CD8-positive, alpha-beta T cell (primary cell): ENCODE measurements at regions of chr17 and their contacts with region 1.

Region 1: GRCh38 chr17:64025732-64026294 is 5.4 kb upstream of the ICAM2 start:
- DNase-seq: peak; percentile 85 to 98 (median 94)
- ATAC-seq: peak; percentile 84
- H3K4me3 ChIP-seq: peak overlapping the region; percentile 19 to 37
- H3K4me3 Mint-ChIP-seq: peak overlapping the region; percentile 80
- H3K27ac ChIP-seq: peak overlapping the region; percentile 68 to 92
- H3K27ac Mint-ChIP-seq: peak overlapping the region; percentile 98
- H3K4me1 ChIP-seq: peaks cover 53% of the 10 kb centered on the region
- H3K4me1 Mint-ChIP-seq: peaks cover 58% of the 10 kb centered on the region
- H3K27me3 ChIP-seq: no peaks in the 10 kb centered on the region
- H3K27me3 Mint-ChIP-seq: no peaks in the 10 kb centered on the region
- CTCF ChIP-seq: peak; percentile 94

Region 2: GRCh38 chr17:63919311-63919723 is 106.5 kb before region 1 on chr17:
- CTCF ChIA-PET with region 1: interaction called, 262 read pairs
- POLR2A ChIA-PET with region 1: interaction called, 12 read pairs
- intact Hi-C with region 1: loop called (anchors 1 kb)
- DNase-seq: peak; percentile 53 to 88 (median 72)
- ATAC-seq: peak; percentile 100
- H3K4me3 ChIP-seq: no peak overlapping the region
- H3K4me3 Mint-ChIP-seq: no peak overlapping the region
- H3K27ac ChIP-seq: no peak overlapping the region
- H3K27ac Mint-ChIP-seq: no peak overlapping the region
- H3K4me1 ChIP-seq: no peaks in the 10 kb centered on the region
- H3K4me1 Mint-ChIP-seq: peaks cover 8% of the 10 kb centered on the region
- H3K27me3 ChIP-seq: no peaks in the 10 kb centered on the region
- H3K27me3 Mint-ChIP-seq: no peaks in the 10 kb centered on the region
- CTCF ChIP-seq: peak; percentile 91

Region 3: GRCh38 chr17:63954402-63955063 is 71.3 kb before region 1 on chr17:
- CTCF ChIA-PET with region 1: interaction called, 15 read pairs
- POLR2A ChIA-PET with region 1: interaction called, 3 read pairs
- intact Hi-C with region 1: no loop called
- DNase-seq: peak in 8 of 9 experiments; percentile 14 to 66 (median 46)
- ATAC-seq: peak; percentile 81
- H3K4me3 ChIP-seq: no peak overlapping the region
- H3K4me3 Mint-ChIP-seq: peak overlapping the region; percentile 35
- H3K27ac ChIP-seq: peak overlapping the region in 1 of 2 experiments; percentile 3
- H3K27ac Mint-ChIP-seq: peak overlapping the region; percentile 75
- H3K4me1 ChIP-seq: peaks cover 19% of the 10 kb centered on the region
- H3K4me1 Mint-ChIP-seq: peaks cover 24% of the 10 kb centered on the region
- H3K27me3 ChIP-seq: no peaks in the 10 kb centered on the region
- H3K27me3 Mint-ChIP-seq: no peaks in the 10 kb centered on the region
- CTCF ChIP-seq: no peak

Region 4: DNA sequence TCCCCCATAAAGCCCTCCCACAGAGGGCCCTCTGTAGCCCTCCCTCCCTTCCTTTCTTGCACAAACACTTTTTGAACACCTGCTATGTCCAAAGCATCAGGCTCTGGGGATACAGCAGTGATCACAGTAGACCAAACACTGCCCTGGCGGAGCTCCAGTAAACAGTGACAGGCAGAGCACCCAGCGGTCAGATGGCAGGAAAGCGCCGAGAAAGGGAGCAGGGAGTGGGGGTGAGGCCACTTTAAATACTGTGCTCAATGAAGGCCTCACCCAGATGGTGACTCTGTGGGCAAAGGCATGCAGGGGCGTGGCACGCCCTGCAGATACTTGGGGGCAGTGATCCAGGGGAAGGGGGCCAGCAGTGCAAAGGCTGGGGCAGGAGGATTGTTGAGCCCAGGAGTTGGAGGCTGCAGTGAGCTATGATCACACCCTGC is 20.1 kb before region 1 on chr17:
- CTCF ChIA-PET with region 1: interaction called, 293 read pairs
- POLR2A ChIA-PET with region 1: interaction called, 20 read pairs
- intact Hi-C with region 1: loop called in 1 of 2 experiments (anchors 2 kb)
- DNase-seq: no peak
- ATAC-seq: no peak
- H3K4me3 ChIP-seq: no peak overlapping the region
- H3K4me3 Mint-ChIP-seq: no peak overlapping the region
- H3K27ac ChIP-seq: no peak overlapping the region
- H3K27ac Mint-ChIP-seq: peak overlapping the region; percentile 85
- H3K4me1 ChIP-seq: peaks cover 39% of the 10 kb centered on the region
- H3K4me1 Mint-ChIP-seq: peaks cover 45% of the 10 kb centered on the region
- H3K27me3 ChIP-seq: no peaks in the 10 kb centered on the region
- H3K27me3 Mint-ChIP-seq: no peaks in the 10 kb centered on the region
- CTCF ChIP-seq: no peak

Region 5: GRCh38 chr17:64056269-64057005 is 30.6 kb after region 1 on chr17:
- CTCF ChIA-PET with region 1: interaction called, 155 read pairs
- POLR2A ChIA-PET with region 1: interaction called, 10 read pairs
- intact Hi-C with region 1: no loop called
- DNase-seq: peak in 2 of 9 experiments; percentile 22 to 44
- ATAC-seq: peak; percentile 39
- H3K4me3 ChIP-seq: no peak overlapping the region
- H3K4me3 Mint-ChIP-seq: no peak overlapping the region
- H3K27ac ChIP-seq: peak overlapping the region; percentile 12 to 58
- H3K27ac Mint-ChIP-seq: peak overlapping the region; percentile 78
- H3K4me1 ChIP-seq: peaks cover 18% of the 10 kb centered on the region
- H3K4me1 Mint-ChIP-seq: peaks cover 41% of the 10 kb centered on the region
- H3K27me3 ChIP-seq: no peaks in the 10 kb centered on the region
- H3K27me3 Mint-ChIP-seq: no peaks in the 10 kb centered on the region
- CTCF ChIP-seq: no peak

Region 6: DNA sequence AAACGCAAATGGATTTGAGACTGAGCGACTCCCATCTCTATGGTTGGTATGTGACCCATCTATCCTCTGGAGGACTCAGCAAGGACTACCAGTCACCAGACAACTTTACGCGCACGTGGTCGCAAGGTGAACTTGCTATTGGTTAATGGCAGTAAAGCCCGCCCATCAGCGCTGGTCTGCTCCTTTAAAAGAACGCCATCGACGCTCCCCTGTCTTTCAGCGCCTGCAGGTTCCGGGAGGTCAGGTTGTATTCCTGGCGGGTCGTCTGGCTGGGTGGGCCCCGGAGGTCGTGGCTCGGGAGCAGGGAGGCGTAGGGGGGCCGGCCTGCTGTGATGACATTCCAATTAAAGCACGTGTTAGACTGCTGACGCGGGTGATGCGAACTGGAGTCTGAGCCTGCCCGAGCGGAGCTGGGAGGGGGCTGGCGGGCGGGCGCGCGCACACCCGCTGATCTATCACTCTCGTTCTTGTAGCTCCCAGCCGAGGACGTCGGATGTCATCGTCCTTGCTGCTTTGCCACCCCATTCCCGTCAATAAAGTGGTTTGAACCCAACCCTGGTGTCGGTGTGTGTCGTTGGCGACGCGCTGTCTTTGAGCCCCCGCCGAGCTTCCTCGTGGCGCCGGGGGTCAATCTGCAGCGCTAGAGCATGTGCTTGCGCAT is 120.1 kb after region 1 on chr17:
- CTCF ChIA-PET with region 1: interaction called, 10 read pairs
- POLR2A ChIA-PET with region 1: interaction called, 59 read pairs
- intact Hi-C with region 1: no loop called
- DNase-seq: peak; percentile 88 to 99 (median 95)
- ATAC-seq: peak; percentile 88
- H3K4me3 ChIP-seq: peak overlapping the region; percentile 74 to 95
- H3K4me3 Mint-ChIP-seq: no peak overlapping the region
- H3K27ac ChIP-seq: peak overlapping the region; percentile 89 to 91
- H3K27ac Mint-ChIP-seq: no peak overlapping the region
- H3K4me1 ChIP-seq: peaks cover 16% of the 10 kb centered on the region
- H3K4me1 Mint-ChIP-seq: peaks cover 27% of the 10 kb centered on the region
- H3K27me3 ChIP-seq: no peaks in the 10 kb centered on the region
- H3K27me3 Mint-ChIP-seq: no peaks in the 10 kb centered on the region
- CTCF ChIP-seq: no peak